ENCODE measurements at regions of chr19 and their contacts with region 1.

Region 1: GRCh38 chr19:35545001-35545911 is at the start of gene TMEM147:
- DNase-seq: peak; percentile 93
- ATAC-seq: peak; percentile 77
- H3K4me3 Mint-ChIP-seq: peak within 1 kb of the TSS; percentile 92
- H3K27ac Mint-ChIP-seq: peak within 1 kb of the TSS; percentile 91
- H3K4me1 Mint-ChIP-seq: peaks cover 35% of the 10 kb centered on the region
- H3K27me3 Mint-ChIP-seq: no peaks in the 10 kb centered on the region
- total RNA-seq, gene TMEM147: 73.1 to 73.8 TPM

Region 2: GRCh38 chr19:35140962-35141637 is 404.2 kb before region 1 on chr19:
- CTCF ChIA-PET with region 1: no interaction called
- POLR2A ChIA-PET with region 1: no interaction called
- intact Hi-C with region 1: loop called in 1 of 2 experiments (anchors 1 kb)
- DNase-seq: peak; percentile 99
- ATAC-seq: peak; percentile 93
- H3K4me3 Mint-ChIP-seq: peak overlapping the region; percentile 75
- H3K27ac Mint-ChIP-seq: peak overlapping the region; percentile 65
- H3K4me1 Mint-ChIP-seq: peaks cover 31% of the 10 kb centered on the region
- H3K27me3 Mint-ChIP-seq: peaks cover 8% of the 10 kb centered on the region

Region 3: DNA sequence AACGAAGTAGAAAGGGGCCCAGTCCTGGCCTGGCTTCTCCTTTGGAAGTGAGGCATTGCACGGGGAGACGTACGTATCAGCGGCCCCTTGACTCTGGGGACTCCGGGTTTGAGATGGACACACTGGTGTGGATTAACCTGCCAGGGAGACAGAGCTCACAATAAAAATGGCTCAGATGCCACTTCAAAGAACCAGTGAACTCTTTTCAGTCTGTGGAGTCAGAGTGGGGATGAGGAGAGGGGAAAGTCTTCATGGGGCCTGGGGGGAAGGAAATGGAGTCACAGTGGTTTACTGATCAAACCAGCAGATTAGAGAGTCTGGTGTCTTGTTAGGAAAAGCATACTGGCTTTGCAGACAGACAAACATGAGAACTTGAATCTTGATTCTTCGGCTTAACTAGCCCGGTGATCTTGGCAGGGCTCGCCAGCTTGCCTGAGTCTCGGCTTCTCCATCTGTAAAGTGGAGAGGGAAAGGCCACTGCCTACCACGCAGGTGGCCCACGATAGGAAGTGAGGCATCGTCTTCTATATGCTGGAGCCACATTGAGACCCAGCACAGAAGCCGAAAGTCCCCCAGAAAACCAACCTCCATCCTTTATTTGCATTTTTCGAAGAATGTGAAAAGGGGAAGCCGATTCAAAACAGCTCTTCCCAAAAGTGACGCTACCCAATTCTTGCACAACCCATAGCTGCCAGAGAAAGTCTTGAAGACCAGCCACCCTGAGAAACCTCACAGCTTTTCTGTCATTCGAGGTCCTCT is 197.9 kb before region 1 on chr19 and contains the start of gene FFAR1:
- CTCF ChIA-PET with region 1: interaction called, 3 read pairs
- POLR2A ChIA-PET with region 1: no interaction called
- intact Hi-C with region 1: loop called (anchors 1 to 5 kb)
- DNase-seq: peak; percentile 85
- ATAC-seq: peak; percentile 74
- H3K4me3 Mint-ChIP-seq: peak within 1 kb of the TSS; percentile 67
- H3K27ac Mint-ChIP-seq: peak within 1 kb of the TSS; percentile 99
- H3K4me1 Mint-ChIP-seq: peaks cover 36% of the 10 kb centered on the region
- H3K27me3 Mint-ChIP-seq: peaks cover 3% of the 10 kb centered on the region
- total RNA-seq, gene FFAR1: 0.23 to 0.35 TPM

Region 4: GRCh38 chr19:35592226-35592625 is 47.0 kb after region 1 on chr19:
- CTCF ChIA-PET with region 1: interaction called, 20 read pairs
- POLR2A ChIA-PET with region 1: no interaction called
- intact Hi-C with region 1: loop called (anchors 1 kb)
- DNase-seq: peak; percentile 49
- ATAC-seq: no peak
- H3K4me3 Mint-ChIP-seq: no peak overlapping the region
- H3K27ac Mint-ChIP-seq: no peak overlapping the region
- H3K4me1 Mint-ChIP-seq: peaks cover 4% of the 10 kb centered on the region
- H3K27me3 Mint-ChIP-seq: peaks cover 4% of the 10 kb centered on the region

Region 5: GRCh38 chr19:35648017-35648961 is 103.0 kb after region 1 on chr19 and contains the start of gene COX6B1:
- CTCF ChIA-PET with region 1: interaction called, 3 read pairs
- POLR2A ChIA-PET with region 1: no interaction called
- intact Hi-C with region 1: loop called (anchors 1 to 5 kb)
- DNase-seq: peak; percentile 95
- ATAC-seq: peak; percentile 76
- H3K4me3 Mint-ChIP-seq: peak within 1 kb of the TSS; percentile 92
- H3K27ac Mint-ChIP-seq: peak within 1 kb of the TSS; percentile 84
- H3K4me1 Mint-ChIP-seq: peaks cover 39% of the 10 kb centered on the region
- H3K27me3 Mint-ChIP-seq: no peaks in the 10 kb centered on the region
- total RNA-seq, gene COX6B1: 385 to 437 TPM

Region 6: DNA sequence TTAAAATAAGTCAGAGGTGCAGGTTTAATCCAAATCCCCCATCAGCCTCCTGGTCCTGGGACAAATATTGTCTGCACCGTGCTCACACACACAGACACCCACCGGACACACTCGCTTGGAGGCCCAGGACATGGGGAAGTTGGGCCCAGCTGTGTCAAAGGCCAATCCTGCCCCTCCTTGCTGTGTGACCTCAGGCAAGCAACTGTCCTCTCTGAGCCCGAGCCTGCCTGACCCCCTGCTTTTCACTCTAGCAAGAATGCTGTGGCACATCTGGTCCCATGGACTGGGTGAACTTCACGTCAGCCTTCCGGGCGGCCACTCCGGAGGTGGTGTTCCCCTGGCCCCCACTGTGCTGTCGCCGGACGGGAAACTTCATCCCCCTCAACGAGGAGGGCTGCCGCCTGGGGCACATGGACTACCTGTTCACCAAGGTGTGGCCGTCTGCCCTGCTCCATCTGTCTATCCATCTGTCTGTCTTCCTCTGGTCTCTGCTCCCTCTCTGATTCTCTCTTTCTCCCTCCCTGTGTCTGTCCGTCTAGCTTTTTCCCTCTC is 130.4 kb after region 1 on chr19:
- CTCF ChIA-PET with region 1: no interaction called
- POLR2A ChIA-PET with region 1: no interaction called
- intact Hi-C with region 1: no loop called
- DNase-seq: no peak
- ATAC-seq: no peak
- H3K4me3 Mint-ChIP-seq: no peak overlapping the region
- H3K27ac Mint-ChIP-seq: no peak overlapping the region
- H3K4me1 Mint-ChIP-seq: peaks cover 9% of the 10 kb centered on the region
- H3K27me3 Mint-ChIP-seq: peaks cover 17% of the 10 kb centered on the region

Region 7: GRCh38 chr19:35716801-35717666 is 171.8 kb after region 1 on chr19:
- CTCF ChIA-PET with region 1: no interaction called
- POLR2A ChIA-PET with region 1: no interaction called
- intact Hi-C with region 1: loop called (anchors 1 to 5 kb)
- DNase-seq: peak; percentile 98
- ATAC-seq: peak; percentile 61
- H3K4me3 Mint-ChIP-seq: peak overlapping the region; percentile 97
- H3K27ac Mint-ChIP-seq: peak overlapping the region; percentile 90
- H3K4me1 Mint-ChIP-seq: peaks cover 41% of the 10 kb centered on the region
- H3K27me3 Mint-ChIP-seq: no peaks in the 10 kb centered on the region

Region 8: GRCh38 chr19:37059142-37059541 is 1513.9 kb after region 1 on chr19:
- CTCF ChIA-PET with region 1: no interaction called
- POLR2A ChIA-PET with region 1: no interaction called
- intact Hi-C with region 1: no loop called
- DNase-seq: no peak
- ATAC-seq: no peak
- H3K4me3 Mint-ChIP-seq: no peak overlapping the region
- H3K27ac Mint-ChIP-seq: no peak overlapping the region
- H3K4me1 Mint-ChIP-seq: no peaks in the 10 kb centered on the region
- H3K27me3 Mint-ChIP-seq: no peaks in the 10 kb centered on the region

Measured in activated CD4-positive, alpha-beta T cell treated with anti-CD3 and anti-CD28 coated beads for 36 hours (primary cell).